HCT116 (cell line): ENCODE measurements at regions of chr19 and their contacts with region 1.

Region 1: GRCh38 chr19:49073514-49074378 is 1.2 kb upstream of the KCNA7 start:
- DNase-seq: peak; percentile 45
- ATAC-seq: peak; percentile 88
- H3K4me3 ChIP-seq: no peak overlapping the region
- H3K27ac ChIP-seq: no peak overlapping the region
- H3K4me1 ChIP-seq: peaks cover 10 to 11% of the 10 kb centered on the region in 2 experiments
- H3K27me3 ChIP-seq: no peaks in the 10 kb centered on the region
- CTCF ChIP-seq: peak; percentile 36 to 65 (median 49)
- POLR2A ChIP-seq: no peak
- RAD21 ChIP-seq: peak; percentile 68

Region 2: DNA sequence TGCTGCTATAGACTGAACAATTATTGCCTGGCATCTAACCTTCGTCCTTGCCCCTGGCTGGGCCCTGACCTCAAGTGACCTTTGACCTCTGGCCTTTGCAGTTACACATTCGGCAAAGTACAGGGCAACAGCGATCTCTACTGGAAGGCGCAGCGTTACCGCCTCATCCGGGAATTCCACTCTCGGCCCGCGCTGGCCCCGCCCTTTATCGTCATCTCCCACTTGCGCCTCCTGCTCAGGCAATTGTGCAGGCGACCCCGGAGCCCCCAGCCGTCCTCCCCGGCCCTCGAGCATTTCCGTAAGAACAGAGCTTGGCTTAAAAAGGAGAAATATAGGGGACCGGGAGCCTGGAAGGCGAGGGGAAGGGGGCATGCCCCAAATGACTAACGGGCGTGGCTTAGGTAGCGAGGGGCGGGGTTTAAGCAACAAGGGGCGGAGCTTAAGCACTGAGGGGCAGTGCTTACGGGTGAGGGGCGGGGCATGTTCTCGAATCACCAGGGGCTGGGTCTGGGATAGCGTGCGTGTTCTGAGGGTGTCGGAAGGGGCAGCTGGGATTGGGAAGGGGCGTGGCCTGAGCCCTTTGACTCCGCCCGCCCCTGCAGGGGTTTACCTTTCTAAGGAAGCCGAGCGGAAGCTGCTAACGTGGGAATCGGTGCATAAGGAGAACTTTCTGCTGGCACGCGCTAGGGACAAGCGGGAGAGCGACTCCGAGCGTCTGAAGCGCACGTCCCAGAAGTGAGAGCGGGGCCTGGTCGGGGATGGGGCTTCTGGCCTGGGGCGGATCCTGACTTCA is 136.6 kb after region 1 on chr19:
- CTCF ChIA-PET with region 1: interaction called, 8 read pairs
- POLR2A ChIA-PET with region 1: no interaction called
- RAD21 ChIA-PET with region 1: interaction called in 1 of 2 experiments, 3 read pairs
- intact Hi-C with region 1: loop called (anchors 1 kb)
- DNase-seq: no peak
- ATAC-seq: peak; percentile 71
- H3K4me3 ChIP-seq: no peak overlapping the region
- H3K27ac ChIP-seq: no peak overlapping the region
- H3K4me1 ChIP-seq: peaks cover 10 to 13% of the 10 kb centered on the region in 2 experiments
- H3K27me3 ChIP-seq: no peaks in the 10 kb centered on the region
- CTCF ChIP-seq: no peak
- POLR2A ChIP-seq: no peak
- RAD21 ChIP-seq: no peak